ENCODE measurements at regions of chr2 and their contacts with region 1.

Region 1: GRCh38 chr2:13260402-13260801 is 543.7 kb downstream of the TRIB2 start:
- DNase-seq: no peak
- H3K4me3 ChIP-seq: no peak overlapping the region
- H3K27ac ChIP-seq: no peak overlapping the region
- H3K4me1 ChIP-seq: no peaks in the 10 kb centered on the region
- H3K27me3 ChIP-seq: peaks cover 0 to 3% (median 0%) of the 10 kb centered on the region in 3 donors
- CTCF ChIP-seq: no peak
- EP300 ChIP-seq: no peak
- POLR2A ChIP-seq: no peak

Region 2: GRCh38 chr2:11652553-11652952 is 1607.8 kb before region 1 on chr2:
- intact Hi-C with region 1: loop called (anchors 10 kb)
- DNase-seq: no peak
- H3K4me3 ChIP-seq: no peak overlapping the region
- H3K27ac ChIP-seq: no peak overlapping the region
- H3K4me1 ChIP-seq: peaks cover 0 to 9% (median 0%) of the 10 kb centered on the region in 4 donors
- H3K27me3 ChIP-seq: no peaks in the 10 kb centered on the region
- CTCF ChIP-seq: no peak
- EP300 ChIP-seq: no peak
- POLR2A ChIP-seq: no peak

Measured in sigmoid colon (tissue), 7 donors.